ENCODE measurements at regions of chr3 and their contacts with region 1.

Region 1: GRCh38 chr3:27312044-27312668 is 57.0 kb downstream of the NEK10 start:
- DNase-seq: no peak
- H3K4me3 ChIP-seq: no peak overlapping the region
- H3K27ac ChIP-seq: no peak overlapping the region
- H3K4me1 ChIP-seq: no peaks in the 10 kb centered on the region
- H3K27me3 ChIP-seq: no peaks in the 10 kb centered on the region
- CTCF ChIP-seq: peak; percentile 61 to 77 (median 73)
- EP300 ChIP-seq: no peak
- POLR2A ChIP-seq: no peak

Region 2: GRCh38 chr3:26807272-26807671 is 504.9 kb before region 1 on chr3:
- intact Hi-C with region 1: no loop called
- DNase-seq: no peak
- H3K4me3 ChIP-seq: no peak overlapping the region
- H3K27ac ChIP-seq: no peak overlapping the region
- H3K4me1 ChIP-seq: no peaks in the 10 kb centered on the region
- H3K27me3 ChIP-seq: no peaks in the 10 kb centered on the region
- CTCF ChIP-seq: no peak
- EP300 ChIP-seq: no peak
- POLR2A ChIP-seq: no peak

Region 3: DNA sequence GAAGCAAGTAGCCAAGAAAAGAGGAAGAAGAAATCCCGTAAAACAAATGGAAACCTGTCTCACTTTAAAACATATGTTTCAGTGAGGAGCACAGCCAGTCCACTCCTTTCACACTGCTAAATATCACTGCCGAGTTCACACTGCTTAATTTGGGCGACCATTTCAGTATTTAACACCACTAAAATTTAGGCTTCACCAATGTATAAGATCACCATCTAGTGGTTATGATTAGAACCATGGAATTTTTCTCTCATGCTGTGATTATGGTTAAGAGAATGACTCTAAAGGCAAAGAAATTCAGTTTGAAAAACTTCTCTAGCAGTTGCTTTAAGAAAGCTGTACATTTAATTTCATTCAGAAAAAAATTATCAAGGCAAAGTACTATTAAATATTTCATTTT is 155.4 kb after region 1 on chr3:
- intact Hi-C with region 1: loop called in 3 of 4 experiments (anchors 5 to 10 kb)
- DNase-seq: no peak
- H3K4me3 ChIP-seq: no peak overlapping the region
- H3K27ac ChIP-seq: no peak overlapping the region
- H3K4me1 ChIP-seq: no peaks in the 10 kb centered on the region
- H3K27me3 ChIP-seq: no peaks in the 10 kb centered on the region
- CTCF ChIP-seq: peak; percentile 34 to 43 (median 37)
- EP300 ChIP-seq: no peak
- POLR2A ChIP-seq: no peak

Measured in ovary (tissue), 10 donors.